HepG2 (cell line): ENCODE measurements at regions of chr16 and their contacts with region 1.

Region 1: GRCh38 chr16:54123766-54124165 is 162.8 kb downstream of the IRX3 start:
- DNase-seq: no peak
- ATAC-seq: no peak
- H3K4me3 ChIP-seq: no peak overlapping the region
- H3K27ac ChIP-seq: no peak overlapping the region
- H3K4me1 ChIP-seq: peaks cover 53% of the 10 kb centered on the region
- H3K27me3 ChIP-seq: no peaks in the 10 kb centered on the region
- CTCF ChIP-seq: no peak
- EP300 ChIP-seq: no peak
- POLR2A ChIP-seq: no peak
- RAD21 ChIP-seq: no peak

Region 2: DNA sequence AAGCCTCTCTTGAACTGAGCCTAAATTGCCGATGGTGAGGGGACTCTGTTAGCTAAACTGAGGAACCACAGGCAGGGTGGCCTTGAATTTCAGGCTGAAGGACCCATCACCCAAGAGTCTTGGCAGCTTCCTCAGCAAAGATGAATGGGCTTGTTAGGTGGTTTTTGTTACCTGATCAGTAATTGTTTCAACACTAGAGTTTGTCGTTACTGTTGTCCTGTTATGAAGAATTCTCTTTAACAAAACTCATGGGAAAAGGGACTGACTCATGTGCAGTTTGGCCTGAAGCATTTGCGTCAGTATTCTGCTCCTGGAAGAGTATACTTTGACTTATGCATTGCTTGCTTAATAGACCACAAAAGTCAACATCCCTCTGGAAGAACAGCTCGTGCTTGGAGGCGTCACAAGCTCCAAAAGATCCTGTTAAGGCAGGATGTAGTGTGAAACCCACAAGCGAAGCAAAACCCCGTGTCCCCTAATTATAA is 43.2 kb before region 1 on chr16:
- CTCF ChIA-PET with region 1: no interaction called
- POLR2A ChIA-PET with region 1: no interaction called
- in situ Hi-C with region 1: no loop called
- intact Hi-C with region 1: loop called (anchors 2 kb)
- DNase-seq: peak; percentile 94
- ATAC-seq: peak; percentile 97
- H3K4me3 ChIP-seq: no peak overlapping the region; a peak in 1 of 6 replicates
- H3K27ac ChIP-seq: peak overlapping the region; percentile 67
- H3K4me1 ChIP-seq: peaks cover 56% of the 10 kb centered on the region
- H3K27me3 ChIP-seq: no peaks in the 10 kb centered on the region
- CTCF ChIP-seq: no peak
- EP300 ChIP-seq: peak; percentile 50 to 75; a peak in 3 of 4 replicates
- POLR2A ChIP-seq: no peak
- RAD21 ChIP-seq: no peak